ENCODE measurements at regions of chr3 and their contacts with region 1.

Region 1: GRCh38 chr3:51371943-51372557 is 13.0 kb upstream of the MANF start:
- DNase-seq: peak; percentile 27 to 58 (median 30)
- ATAC-seq: peak; percentile 74
- H3K4me3 ChIP-seq: no peak overlapping the region
- H3K27ac ChIP-seq: no peak overlapping the region
- H3K4me1 ChIP-seq: no peaks in the 10 kb centered on the region; a peak in 2 of 5 replicates
- H3K27me3 ChIP-seq: peaks cover 13 to 42% of the 10 kb centered on the region in 2 experiments
- CTCF ChIP-seq: peak; percentile 49 to 74 (median 54); a peak in 5 of 6 replicates
- EP300 ChIP-seq: no peak
- POLR2A ChIP-seq: no peak
- RAD21 ChIP-seq: peak; percentile 52 to 77

Region 2: DNA sequence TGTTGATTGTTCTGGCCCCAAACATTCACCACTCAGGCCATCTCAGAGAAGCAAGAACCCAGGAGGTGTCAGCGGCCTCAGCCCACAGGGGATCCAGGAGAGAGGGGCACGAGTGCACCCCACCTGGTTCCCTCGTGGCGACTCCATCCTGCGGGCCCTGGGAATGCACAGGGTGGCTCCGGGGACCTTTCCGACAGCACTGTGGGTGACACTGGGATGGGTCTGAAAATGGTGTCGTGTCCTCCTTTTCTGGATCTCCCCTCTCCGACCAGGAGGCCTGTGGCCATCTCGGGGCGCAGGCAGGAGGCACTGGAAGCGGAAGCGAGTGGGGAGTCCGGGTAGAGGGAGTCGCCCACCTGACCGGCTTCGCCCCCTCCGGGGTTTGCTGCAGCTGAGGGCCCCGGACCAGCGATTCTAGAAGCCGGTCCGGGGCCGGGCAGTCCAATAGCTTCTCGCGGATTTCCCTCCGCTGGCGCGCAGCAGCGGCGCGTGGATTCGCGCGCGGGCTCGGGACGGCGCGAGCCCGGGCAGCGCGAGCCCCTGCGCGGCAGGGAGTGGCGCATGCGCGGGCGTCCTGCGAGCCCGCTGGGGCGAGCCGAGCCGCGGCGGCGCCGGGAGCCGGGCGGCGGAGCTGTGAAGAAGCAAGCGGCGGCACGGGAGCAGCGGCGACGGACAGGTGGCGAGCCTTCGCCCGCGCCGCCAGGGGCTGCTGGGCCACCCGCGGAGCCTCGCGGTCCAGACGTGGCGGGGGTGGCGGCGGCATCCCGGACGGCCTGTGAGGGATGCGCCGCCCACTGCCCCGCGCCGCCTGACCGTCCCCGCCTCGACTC is 697.5 kb before region 1 on chr3 and contains the start of gene DOCK3:
- CTCF ChIA-PET with region 1: no interaction called
- POLR2A ChIA-PET with region 1: no interaction called
- in situ Hi-C with region 1: no loop called
- intact Hi-C with region 1: loop called (anchors 10 kb)
- DNase-seq: peak; percentile 47 to 77 (median 69)
- ATAC-seq: peak; percentile 95
- H3K4me3 ChIP-seq: peak within 1 kb of the TSS; percentile 16; the same call in 1 of the 2 replicates
- H3K27ac ChIP-seq: no peak within 1 kb of the TSS
- H3K4me1 ChIP-seq: peaks cover 0 to 14% of the 10 kb centered on the region in 2 experiments; a peak in 2 of 5 replicates
- H3K27me3 ChIP-seq: peaks cover 11 to 27% of the 10 kb centered on the region in 2 experiments; a peak in 4 of 5 replicates
- CTCF ChIP-seq: no peak
- EP300 ChIP-seq: no peak
- POLR2A ChIP-seq: no peak
- RAD21 ChIP-seq: no peak
- polyA plus RNA-seq, gene DOCK3: 0.01 TPM

Region 3: GRCh38 chr3:50971487-50971924 is 400.5 kb before region 1 on chr3:
- CTCF ChIA-PET with region 1: interaction called, 4 read pairs
- POLR2A ChIA-PET with region 1: no interaction called
- in situ Hi-C with region 1: no loop called
- intact Hi-C with region 1: loop called (anchors 2 kb)
- DNase-seq: peak; percentile 38 to 50 (median 41)
- ATAC-seq: peak; percentile 85
- H3K4me3 ChIP-seq: no peak overlapping the region
- H3K27ac ChIP-seq: no peak overlapping the region
- H3K4me1 ChIP-seq: no peaks in the 10 kb centered on the region
- H3K27me3 ChIP-seq: no peaks in the 10 kb centered on the region
- CTCF ChIP-seq: peak; percentile 72 to 81 (median 73)
- EP300 ChIP-seq: no peak
- POLR2A ChIP-seq: no peak
- RAD21 ChIP-seq: peak; percentile 33 to 69; a peak in 3 of 4 replicates

Region 4: DNA sequence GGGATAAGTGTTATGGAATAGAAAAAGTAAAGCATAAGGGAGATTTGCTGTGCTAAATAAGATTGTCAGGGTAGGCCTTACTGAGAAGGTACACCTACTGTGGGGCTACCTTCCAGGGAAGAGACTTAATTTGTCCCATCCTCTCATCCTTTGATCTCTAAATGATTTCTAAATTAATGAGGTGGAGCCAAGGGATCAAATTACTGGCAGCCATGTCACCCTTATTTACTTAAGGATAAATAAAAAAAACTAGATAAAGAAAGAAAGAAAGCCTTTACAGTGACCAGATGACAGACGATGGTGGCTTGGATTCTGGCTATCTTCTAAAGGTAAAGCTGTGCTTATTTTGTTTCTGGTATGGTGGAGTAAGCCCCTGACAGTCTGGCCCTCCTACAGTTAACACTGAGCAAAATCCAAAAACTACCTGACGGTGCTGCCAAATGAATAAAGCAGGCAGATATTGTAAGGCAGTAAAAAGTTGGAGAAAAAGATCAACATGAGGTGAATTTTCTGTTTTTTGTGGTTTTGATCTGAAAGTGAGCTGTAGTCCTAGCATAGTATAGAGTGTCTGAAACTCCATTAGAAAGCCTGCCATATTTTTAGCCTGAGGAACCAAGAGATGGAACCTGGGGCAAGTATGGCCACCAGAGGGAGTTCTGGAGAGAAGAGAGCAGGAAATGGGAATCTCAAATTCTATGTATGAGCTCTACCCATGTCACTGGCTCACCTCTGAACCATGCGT is 272.1 kb before region 1 on chr3:
- CTCF ChIA-PET with region 1: interaction called, 5 read pairs
- POLR2A ChIA-PET with region 1: no interaction called
- in situ Hi-C with region 1: loop called (anchors 10 kb)
- intact Hi-C with region 1: loop called (anchors 5 kb)
- DNase-seq: peak; percentile 23 to 41 (median 25)
- ATAC-seq: peak; percentile 86
- H3K4me3 ChIP-seq: no peak overlapping the region
- H3K27ac ChIP-seq: no peak overlapping the region
- H3K4me1 ChIP-seq: no peaks in the 10 kb centered on the region
- H3K27me3 ChIP-seq: no peaks in the 10 kb centered on the region
- CTCF ChIP-seq: peak; percentile 49 to 60 (median 56); a peak in 5 of 6 replicates
- EP300 ChIP-seq: no peak
- POLR2A ChIP-seq: no peak
- RAD21 ChIP-seq: peak in 1 of 2 experiments; percentile 49; a peak in 2 of 4 replicates

Region 5: DNA sequence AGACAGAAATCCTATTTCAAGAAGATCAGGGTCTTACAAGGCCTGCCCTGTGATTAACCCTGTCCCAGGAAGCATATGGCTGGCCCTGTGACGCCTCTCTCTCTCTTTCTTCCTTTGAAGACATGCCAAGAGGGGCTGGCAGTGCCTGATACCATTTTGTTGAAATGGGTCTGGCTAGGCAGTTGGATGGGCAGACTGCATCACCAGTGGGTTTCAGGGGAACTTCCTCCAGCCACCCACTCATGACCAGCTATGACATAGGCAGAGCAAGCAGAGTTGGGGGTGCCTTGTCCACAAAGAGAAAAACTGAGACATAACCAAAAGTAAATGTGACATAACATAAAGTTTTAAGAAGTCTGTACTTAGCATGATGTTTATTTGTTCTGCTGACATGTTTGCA is 18.4 kb before region 1 on chr3:
- CTCF ChIA-PET with region 1: no interaction called
- POLR2A ChIA-PET with region 1: no interaction called
- in situ Hi-C with region 1: no loop called
- intact Hi-C with region 1: no loop called
- DNase-seq: no peak
- ATAC-seq: no peak
- H3K4me3 ChIP-seq: no peak overlapping the region
- H3K27ac ChIP-seq: no peak overlapping the region
- H3K4me1 ChIP-seq: no peaks in the 10 kb centered on the region; a peak in 1 of 5 replicates
- H3K27me3 ChIP-seq: peaks cover 0 to 3% of the 10 kb centered on the region in 2 experiments; a peak in 1 of 5 replicates
- CTCF ChIP-seq: no peak
- EP300 ChIP-seq: no peak
- POLR2A ChIP-seq: no peak
- RAD21 ChIP-seq: no peak